ENCODE measurements at regions of chr13 and their contacts with region 1.

Region 1: GRCh38 chr13:50887151-50887550 is 22.4 kb upstream of the RNASEH2B start:
- DNase-seq: no peak

Region 2: DNA sequence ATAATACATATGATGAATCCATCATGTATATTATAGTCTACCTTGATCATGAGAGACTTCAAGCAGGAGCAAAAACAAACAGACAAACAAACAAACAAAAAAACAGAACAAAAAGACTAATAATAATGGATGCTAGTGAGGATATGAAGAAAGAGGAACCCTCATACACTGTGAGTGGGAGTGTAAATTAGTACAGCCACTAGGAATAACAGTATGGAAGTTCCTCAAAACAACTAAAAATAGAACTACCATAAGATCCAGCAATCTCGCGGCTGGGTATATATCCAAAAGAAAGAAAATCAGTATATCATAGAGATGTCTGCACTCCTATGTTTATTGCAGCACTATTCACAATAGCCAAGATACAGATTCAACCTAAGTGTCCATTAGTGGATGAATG is 36.7 kb before region 1 on chr13:
- intact Hi-C with region 1: no loop called
- DNase-seq: no peak

Region 3: DNA sequence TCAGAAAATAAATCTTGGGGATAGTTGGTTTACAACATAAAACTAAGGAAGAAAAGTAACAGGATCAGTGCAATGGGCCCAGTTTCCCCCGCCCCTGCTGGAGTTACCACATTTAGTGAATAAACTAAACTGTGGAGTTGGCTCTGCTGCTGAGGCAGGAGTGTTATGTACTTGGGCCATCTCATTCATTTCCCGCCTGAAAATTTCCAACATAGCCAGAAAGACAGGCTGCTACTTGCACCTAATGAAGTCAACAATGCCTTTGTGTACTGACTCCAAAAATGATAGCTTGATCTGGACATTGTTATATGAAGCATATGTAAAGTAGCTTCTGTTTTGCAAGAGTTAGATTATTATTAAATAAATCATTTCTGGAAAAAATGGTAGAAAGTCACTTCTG is 14.6 kb after region 1 on chr13:
- intact Hi-C with region 1: no loop called
- DNase-seq: no peak

Region 4: GRCh38 chr13:51704399-51705313 is 817.5 kb after region 1 on chr13:
- intact Hi-C with region 1: loop called in 1 of 2 experiments (anchors 5 kb)
- DNase-seq: no peak